Heart left ventricle (tissue), 16 donors: ENCODE measurements at regions of chr6 and their contacts with region 1.

Region 1: DNA sequence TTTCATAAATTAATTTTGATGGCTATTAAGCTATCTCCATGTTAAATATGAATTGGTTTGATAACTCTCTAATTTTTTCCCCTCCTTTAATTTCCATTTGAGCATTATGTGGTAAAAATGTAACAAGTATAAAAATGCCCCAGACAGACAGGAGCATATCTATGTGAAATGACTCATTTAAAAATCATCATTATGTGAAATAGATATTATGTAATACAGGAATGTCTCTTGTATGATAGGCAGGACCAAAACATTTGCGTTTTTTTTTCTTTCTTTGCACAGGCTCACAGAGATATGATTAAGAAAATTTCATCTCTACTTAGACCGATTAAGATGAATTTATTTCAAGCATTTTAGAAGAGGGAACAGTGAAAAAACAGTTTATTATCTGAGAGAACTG is 95.8 kb downstream of the AKAP7 start:
- DNase-seq: no peak
- ATAC-seq: no peak
- H3K4me3 ChIP-seq: no peak overlapping the region
- H3K27ac ChIP-seq: no peak overlapping the region
- H3K4me1 ChIP-seq: no peaks in the 10 kb centered on the region
- H3K27me3 ChIP-seq: no peaks in the 10 kb centered on the region
- CTCF ChIP-seq: no peak
- POLR2A ChIP-seq: no peak

Region 2: GRCh38 chr6:131116749-131117360 is 114.2 kb before region 1 on chr6:
- intact Hi-C with region 1: no loop called
- DNase-seq: no peak
- ATAC-seq: peak in 2 of 4 donors; percentile 39 to 42
- H3K4me3 ChIP-seq: no peak overlapping the region
- H3K27ac ChIP-seq: no peak overlapping the region
- H3K4me1 ChIP-seq: peaks cover 0 to 10% (median 0%) of the 10 kb centered on the region in 12 donors
- H3K27me3 ChIP-seq: no peaks in the 10 kb centered on the region
- CTCF ChIP-seq: peak; percentile 37 to 71 (median 49)
- POLR2A ChIP-seq: no peak

Region 3: DNA sequence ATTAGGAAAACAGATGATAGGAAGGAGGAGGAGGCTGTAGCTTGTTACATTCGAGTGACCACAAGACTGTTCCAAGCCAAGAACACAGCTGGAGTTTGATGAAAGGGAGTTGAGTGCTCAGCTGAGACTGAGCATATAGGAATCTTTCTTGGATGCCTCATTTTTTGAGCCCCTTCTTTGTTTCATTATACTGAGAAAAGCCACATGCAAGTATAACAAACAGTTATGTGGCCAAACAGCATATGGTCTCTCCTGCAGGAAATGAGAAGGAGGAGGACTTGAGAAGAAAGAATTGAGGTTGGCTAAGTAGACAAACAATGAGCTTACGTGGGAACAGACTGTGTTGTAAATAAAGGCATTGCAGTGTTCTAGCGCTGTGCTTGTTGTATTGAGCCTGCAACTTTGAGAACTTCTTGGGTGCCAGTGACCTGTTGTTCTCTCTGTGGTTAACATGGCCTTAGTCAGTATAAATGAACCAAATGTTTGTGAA is 17.6 kb before region 1 on chr6:
- intact Hi-C with region 1: loop called in 1 of 10 experiments (anchors 2 kb)
- DNase-seq: no peak
- ATAC-seq: peak; percentile 55 to 68 (median 62)
- H3K4me3 ChIP-seq: no peak overlapping the region
- H3K27ac ChIP-seq: peak overlapping the region in 7 of 12 donors; percentile 7 to 63 (median 33)
- H3K4me1 ChIP-seq: peaks cover 0 to 42% (median 25%) of the 10 kb centered on the region in 12 donors
- H3K27me3 ChIP-seq: no peaks in the 10 kb centered on the region
- CTCF ChIP-seq: no peak
- POLR2A ChIP-seq: no peak